ENCODE measurements at regions of chr22 and their contacts with region 1.

Region 1: DNA sequence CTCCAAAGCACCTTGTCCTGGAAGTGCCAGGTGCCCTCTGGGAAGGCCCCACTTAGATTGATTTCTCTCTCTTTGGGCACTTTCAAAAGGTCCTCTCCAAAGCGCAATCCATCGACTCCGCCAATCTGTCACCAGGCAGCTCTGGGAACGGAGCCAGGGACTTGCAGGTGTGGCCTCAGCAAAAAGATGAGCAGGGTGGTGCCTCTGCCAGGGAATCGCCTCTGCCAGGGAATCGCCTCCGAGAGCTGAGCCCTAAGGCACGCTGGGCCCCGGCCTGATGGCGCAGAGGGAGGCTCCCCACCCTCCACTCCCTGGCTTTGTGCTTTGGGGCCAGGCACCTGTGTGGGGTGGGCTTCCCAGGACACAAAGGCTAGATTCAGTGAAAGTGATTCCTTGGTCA is 1391.3 kb downstream of the TBC1D22A start:
- DNase-seq: no peak

Region 2: DNA sequence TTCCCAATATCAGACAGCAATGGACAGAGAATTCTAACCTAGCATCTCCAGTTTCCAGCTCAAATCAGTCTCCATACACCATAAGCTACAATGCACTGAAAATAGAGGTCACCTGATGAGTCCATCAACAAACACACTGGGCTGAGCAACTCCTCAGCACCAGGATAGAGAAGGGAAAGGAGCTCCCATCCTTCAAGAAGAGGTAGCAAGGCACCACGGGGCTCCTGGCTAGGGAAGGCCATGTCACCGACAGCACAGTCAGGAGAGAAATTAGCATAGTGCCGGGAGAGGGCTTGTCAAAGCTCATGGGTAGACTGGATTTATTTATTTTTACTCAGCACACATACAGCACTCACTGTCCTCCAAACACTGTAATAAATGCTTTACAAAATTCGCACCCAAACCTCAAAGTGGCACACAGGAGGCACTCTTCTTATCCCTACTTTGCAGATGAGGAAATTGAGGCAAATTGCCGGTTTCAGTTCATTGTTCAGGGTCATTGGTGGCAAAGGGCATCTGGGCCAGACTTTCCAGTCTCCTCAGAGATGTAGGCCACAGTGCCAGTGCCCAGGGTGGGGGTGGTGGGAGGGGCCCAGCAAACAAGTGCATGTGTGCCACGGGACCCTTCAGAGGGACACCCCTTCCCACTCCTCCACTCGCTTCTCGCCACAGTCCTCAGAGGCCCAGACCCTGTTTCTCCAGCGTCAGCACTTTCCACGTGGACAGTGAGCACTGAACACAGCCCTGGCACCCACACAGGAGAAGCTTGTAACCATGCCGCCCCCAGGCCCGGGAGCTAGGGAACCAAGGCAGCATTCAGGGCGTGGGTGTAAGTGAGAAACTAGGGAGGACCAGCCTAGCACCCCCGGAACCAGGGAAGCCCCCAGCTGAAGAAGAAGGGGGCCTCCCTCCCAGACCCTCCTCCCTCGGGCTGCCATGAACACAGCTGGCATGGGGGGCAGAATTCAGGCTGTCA is 26.1 kb after region 1 on chr22:
- intact Hi-C with region 1: loop called in 1 of 2 experiments (anchors 1 kb)
- DNase-seq: no peak

Region 3: DNA sequence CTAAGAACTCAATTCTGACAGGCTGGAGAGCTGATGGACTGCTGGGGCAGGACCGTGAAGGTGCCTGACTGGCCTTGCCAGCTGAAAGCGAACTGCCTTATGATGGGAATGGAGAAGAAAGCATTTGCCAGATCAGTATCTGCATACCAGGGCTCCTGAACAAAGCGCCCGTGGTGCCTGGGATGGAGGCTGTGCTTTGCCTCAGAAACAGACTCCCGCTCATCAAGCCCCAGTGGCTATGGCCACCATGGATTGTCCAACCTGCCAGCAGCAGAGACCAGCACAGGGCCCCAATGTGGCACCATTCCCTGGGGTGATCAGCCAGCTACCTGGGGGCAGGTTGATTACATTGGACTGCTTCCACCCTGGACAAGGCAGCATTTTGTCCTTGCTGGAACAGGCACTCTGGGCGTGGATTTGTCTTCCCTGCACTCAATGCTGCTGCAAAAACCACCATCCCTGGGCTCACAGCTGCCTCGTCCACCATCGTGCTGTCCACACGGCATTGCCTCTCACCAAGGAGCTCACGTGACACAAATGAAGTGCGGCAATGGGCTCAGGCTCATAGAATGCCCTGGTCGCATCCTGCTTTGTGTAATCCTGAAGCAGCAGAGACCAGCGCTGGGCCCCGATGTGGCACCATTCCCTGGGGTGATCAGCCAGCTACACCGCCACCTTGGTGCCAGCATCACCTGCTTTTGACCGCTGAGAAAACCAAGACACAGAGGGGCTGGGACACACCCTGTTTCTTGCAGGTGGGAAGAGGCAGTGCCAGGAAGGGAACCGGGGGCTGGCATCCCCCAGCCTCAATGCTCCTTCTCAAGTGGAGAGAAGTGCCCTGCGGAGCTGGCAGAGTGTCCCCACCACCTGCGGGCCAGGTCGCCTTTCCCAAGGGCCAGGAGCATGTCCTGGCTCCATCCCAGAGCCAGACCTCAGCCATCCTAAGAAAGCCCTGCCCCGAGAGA is 306.4 kb after region 1 on chr22:
- intact Hi-C with region 1: no loop called
- DNase-seq: peak; percentile 74

Measured in posterior vena cava (tissue), 2 donors.